Gastrocnemius medialis (tissue), 4 donors: ENCODE measurements at regions of chr10 and their contacts with region 1.

Region 1: GRCh38 chr10:68752711-68753350 is 31.8 kb downstream of the CCAR1 start:
- DNase-seq: no peak
- ATAC-seq: no peak
- H3K4me3 ChIP-seq: no peak overlapping the region
- H3K27ac ChIP-seq: no peak overlapping the region
- H3K4me1 ChIP-seq: no peaks in the 10 kb centered on the region
- H3K27me3 ChIP-seq: no peaks in the 10 kb centered on the region
- CTCF ChIP-seq: no peak
- POLR2A ChIP-seq: no peak

Region 2: DNA sequence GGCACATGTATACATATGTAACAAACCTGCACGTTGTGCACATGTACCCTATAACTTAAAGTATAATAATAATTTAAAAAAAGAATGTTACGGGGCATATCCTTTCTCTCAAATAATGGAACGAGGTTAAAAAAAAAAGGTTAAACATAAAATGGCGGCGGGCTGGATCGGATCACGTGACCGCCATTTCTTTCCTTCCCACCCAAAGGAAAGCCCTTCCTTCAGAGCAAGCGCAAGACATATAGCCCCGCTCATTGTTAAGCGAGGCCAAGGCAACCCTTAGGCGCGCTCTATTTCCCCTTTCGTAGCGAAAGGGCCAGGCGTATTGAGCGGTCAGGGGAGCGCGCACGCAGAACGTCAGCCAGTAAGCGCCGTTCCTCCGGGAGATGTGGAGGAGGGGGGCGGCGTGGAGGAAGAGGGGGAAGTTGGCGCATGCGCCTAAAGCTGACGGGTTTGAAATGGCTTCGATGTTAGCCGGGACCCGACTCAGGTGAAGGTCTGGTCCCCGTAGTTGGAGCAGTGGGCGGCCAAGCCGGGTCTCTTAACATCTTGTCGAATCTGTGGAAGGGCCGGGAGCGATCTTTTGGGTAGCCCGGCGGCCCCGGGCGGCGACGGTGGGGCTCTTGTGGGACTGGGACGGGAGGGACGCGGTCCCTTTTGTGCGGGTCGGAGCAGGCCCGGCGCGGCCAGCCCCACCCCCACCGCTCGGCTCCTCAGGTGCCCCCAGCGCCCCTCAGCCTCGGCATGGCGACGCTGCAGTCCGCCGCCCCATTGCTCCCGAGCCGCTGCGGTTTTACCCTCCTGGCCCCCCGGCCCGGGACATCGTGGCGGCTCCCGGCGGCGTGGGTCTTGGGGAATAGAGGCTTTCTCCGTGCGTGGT is 31.8 kb before region 1 on chr10 and contains the start of gene CCAR1:
- in situ Hi-C with region 1: no loop called
- intact Hi-C with region 1: no loop called
- DNase-seq: peak; percentile 93 to 95
- ATAC-seq: peak; percentile 97 to 98
- H3K4me3 ChIP-seq: peak within 1 kb of the TSS; percentile 88 to 96 (median 90)
- H3K27ac ChIP-seq: peak within 1 kb of the TSS; percentile 94 to 99 (median 96)
- H3K4me1 ChIP-seq: peaks cover 7 to 9% of the 10 kb centered on the region in 2 donors
- H3K27me3 ChIP-seq: no peaks in the 10 kb centered on the region
- CTCF ChIP-seq: no peak
- POLR2A ChIP-seq: peak; percentile 67 to 73
- total RNA-seq, gene CCAR1: 17.8 to 71.3 (median 37.7) TPM

Region 3: DNA sequence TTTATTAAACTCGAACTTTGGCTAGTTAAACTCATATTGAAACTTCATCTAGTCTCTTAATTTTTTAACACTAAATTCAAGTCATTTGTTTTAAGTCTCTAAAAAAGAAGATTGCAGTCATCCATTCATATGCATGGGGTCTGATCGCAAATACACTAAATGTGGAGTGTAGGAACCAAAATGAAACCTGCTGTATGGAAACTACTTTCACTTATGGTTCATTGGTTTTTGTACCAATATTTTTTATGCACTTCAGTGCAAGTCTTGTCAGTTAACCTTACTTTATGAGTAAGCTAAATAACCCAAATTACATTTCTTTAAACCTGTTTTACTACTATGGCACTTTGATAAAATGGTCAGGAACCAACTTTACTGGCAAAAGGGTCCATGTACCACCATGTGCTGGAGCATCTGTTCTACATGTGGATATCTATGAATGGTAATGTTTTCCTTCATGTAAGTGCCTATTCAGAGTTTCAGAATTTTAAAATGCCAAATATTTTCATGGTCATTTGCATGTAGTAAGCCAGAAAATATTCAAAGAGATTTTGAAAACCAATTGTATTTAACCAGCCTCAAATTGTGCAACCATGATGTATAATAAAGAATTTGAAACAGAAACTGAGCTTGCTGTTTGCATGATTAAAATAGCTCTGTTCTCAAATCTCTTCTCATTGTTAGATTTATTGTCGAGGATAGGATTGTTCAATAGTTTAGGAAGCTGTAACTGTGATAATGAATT is 419.6 kb after region 1 on chr10:
- in situ Hi-C with region 1: loop called in 1 of 4 experiments (anchors 25 kb)
- intact Hi-C with region 1: loop called (anchors 5 kb)
- DNase-seq: no peak
- ATAC-seq: no peak
- H3K4me3 ChIP-seq: no peak overlapping the region
- H3K27ac ChIP-seq: no peak overlapping the region
- H3K4me1 ChIP-seq: no peaks in the 10 kb centered on the region
- H3K27me3 ChIP-seq: no peaks in the 10 kb centered on the region
- CTCF ChIP-seq: no peak
- POLR2A ChIP-seq: no peak